PC-3 (cell line): ENCODE measurements at regions of chr1 and their contacts with region 1.

Region 1: GRCh38 chr1:203572134-203572625 is 54.5 kb upstream of the ATP2B4 start:
- DNase-seq: no peak
- ATAC-seq: no peak
- H3K4me3 ChIP-seq: no peak overlapping the region
- H3K27ac ChIP-seq: no peak overlapping the region
- H3K4me1 ChIP-seq: peaks cover 12% of the 10 kb centered on the region
- H3K27me3 ChIP-seq: no peaks in the 10 kb centered on the region
- CTCF ChIP-seq: no peak

Region 2: GRCh38 chr1:203440771-203441170 is 131.4 kb before region 1 on chr1:
- CTCF ChIA-PET with region 1: no interaction called
- POLR2A ChIA-PET with region 1: no interaction called
- intact Hi-C with region 1: no loop called
- DNase-seq: peak; percentile 47
- ATAC-seq: peak; percentile 95
- H3K4me3 ChIP-seq: no peak overlapping the region
- H3K27ac ChIP-seq: no peak overlapping the region
- H3K4me1 ChIP-seq: no peaks in the 10 kb centered on the region
- H3K27me3 ChIP-seq: peaks cover 66% of the 10 kb centered on the region
- CTCF ChIP-seq: peak; percentile 60

Region 3: GRCh38 chr1:203776636-203777035 is 204.5 kb after region 1 on chr1:
- CTCF ChIA-PET with region 1: interaction called, 18 read pairs
- POLR2A ChIA-PET with region 1: no interaction called
- intact Hi-C with region 1: no loop called
- DNase-seq: peak; percentile 29
- ATAC-seq: peak; percentile 51; the same call in 1 of the 2 replicates
- H3K4me3 ChIP-seq: no peak overlapping the region
- H3K27ac ChIP-seq: no peak overlapping the region
- H3K4me1 ChIP-seq: no peaks in the 10 kb centered on the region
- H3K27me3 ChIP-seq: no peaks in the 10 kb centered on the region
- CTCF ChIP-seq: peak; percentile 52